Right lobe of liver (tissue), 6 donors: ENCODE measurements at regions of chr19 and their contacts with region 1.

Region 1: DNA sequence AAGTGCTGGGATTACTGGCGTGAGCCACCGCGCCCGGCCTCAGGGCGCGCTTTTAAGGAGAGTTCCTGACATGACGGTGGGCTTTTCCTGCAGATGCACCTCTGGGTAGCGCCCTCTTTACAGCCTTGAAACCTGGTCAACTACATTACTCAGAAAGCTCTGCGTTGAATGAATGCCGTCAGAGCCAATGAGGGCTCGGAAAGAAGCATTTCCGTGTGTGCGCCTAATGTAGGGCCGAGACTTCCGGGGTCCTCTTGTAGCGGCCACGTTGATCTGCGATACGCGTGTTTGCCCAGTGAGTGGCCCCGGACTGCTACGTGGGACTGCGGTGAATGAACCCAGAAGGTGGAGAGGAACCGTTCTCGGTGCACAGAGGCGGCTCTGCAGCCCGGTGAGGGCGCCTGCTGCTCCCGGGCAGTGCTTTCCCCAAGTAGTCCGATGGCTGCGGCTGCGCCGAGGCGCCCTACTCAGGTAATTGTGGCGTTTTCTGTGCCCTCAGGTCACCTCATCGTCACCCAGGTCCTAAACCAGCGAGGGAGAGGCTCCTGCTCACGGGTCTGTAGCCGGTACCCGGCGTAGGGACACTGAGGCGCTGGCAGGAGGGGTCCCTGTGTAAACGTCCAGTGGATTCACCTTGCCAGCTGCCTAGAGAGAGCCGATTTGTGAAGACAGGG is 4.9 kb upstream of the ZNF552 start:
- DNase-seq: peak; percentile 84 to 93 (median 92)
- ATAC-seq: peak; percentile 79 to 87 (median 84)
- H3K4me3 ChIP-seq: peak overlapping the region; percentile 54 to 76 (median 74)
- H3K27ac ChIP-seq: peak overlapping the region; percentile 49 to 66 (median 53)
- H3K4me1 ChIP-seq: peaks cover 0 to 42% (median 4%) of the 10 kb centered on the region in 4 donors
- H3K27me3 ChIP-seq: no peaks in the 10 kb centered on the region
- CTCF ChIP-seq: peak in 2 of 4 donors; percentile 3 to 20
- POLR2A ChIP-seq: peak; percentile 78

Region 2: GRCh38 chr19:57759096-57759495 is 60.5 kb before region 1 on chr19:
- intact Hi-C with region 1: loop called in 1 of 2 experiments (anchors 10 kb)
- DNase-seq: no peak
- ATAC-seq: peak in 1 of 4 donors; percentile 24
- H3K4me3 ChIP-seq: no peak overlapping the region
- H3K27ac ChIP-seq: no peak overlapping the region
- H3K4me1 ChIP-seq: no peaks in the 10 kb centered on the region
- H3K27me3 ChIP-seq: no peaks in the 10 kb centered on the region
- CTCF ChIP-seq: no peak
- POLR2A ChIP-seq: no peak